ENCODE measurements at regions of chr11 and their contacts with region 1.

Region 1: DNA sequence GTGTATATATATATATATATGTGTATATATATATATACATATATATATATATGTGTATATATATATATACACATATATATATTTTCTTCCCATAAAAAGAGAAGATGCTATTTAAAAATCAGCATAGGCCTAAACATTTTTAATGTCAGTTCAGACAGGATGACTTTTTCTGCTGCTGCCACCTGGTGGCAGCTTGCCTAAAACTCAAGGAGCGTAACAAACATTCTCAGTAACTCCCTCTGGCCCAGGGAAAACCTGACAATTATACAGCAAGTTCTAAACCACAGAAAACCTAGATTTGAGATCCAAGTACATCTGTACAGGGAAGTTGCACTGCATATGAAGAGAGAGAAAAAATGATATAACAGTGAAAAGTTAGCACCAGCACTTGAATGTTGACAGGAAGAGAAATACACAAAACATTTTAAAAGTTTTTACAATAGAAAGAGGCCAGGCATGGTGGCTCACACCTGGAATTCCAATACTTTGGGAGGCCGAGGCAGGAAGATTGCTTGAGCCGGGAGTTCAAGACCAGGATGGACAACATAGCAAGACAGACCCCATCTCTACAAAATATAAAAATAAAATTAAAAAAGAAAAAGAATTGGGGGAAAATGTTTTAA is 16.6 kb downstream of the OR8A1 start:
- DNase-seq: no peak
- H3K4me3 ChIP-seq: no peak overlapping the region
- H3K27ac ChIP-seq: no peak overlapping the region
- H3K4me1 ChIP-seq: no peaks in the 10 kb centered on the region
- H3K27me3 ChIP-seq: no peaks in the 10 kb centered on the region
- CTCF ChIP-seq: peak in 1 of 3 experiments; percentile 21
- POLR2A ChIP-seq: no peak

Region 2: DNA sequence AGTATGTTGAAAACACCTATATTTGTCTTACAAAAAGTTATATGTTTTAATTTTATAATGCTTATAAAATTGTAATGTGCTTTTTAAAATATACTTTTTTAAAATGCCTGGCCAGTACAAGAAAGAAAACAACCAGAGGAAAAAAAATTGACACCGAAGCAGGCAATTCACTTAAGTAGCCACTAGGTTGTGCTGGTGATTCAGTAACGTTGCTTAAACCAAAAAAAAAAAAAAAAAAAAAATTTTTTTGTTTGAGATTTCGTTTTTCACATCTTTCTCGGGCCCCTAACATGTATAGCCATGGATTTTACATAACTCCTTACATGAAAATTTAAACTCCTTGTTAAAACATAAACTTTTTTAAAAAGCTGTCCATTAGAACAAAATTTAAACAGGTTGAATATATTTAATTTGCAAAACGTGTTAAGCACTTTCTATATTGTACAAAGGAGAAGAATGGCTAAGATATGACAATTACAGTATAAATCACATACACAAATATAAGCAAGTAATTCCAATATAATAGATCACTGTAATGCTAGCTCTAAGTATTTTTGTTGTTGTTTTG is 170.9 kb before region 1 on chr11:
- intact Hi-C with region 1: loop called (anchors 10 kb)
- DNase-seq: no peak
- H3K4me3 ChIP-seq: no peak overlapping the region
- H3K27ac ChIP-seq: no peak overlapping the region
- H3K4me1 ChIP-seq: no peaks in the 10 kb centered on the region
- H3K27me3 ChIP-seq: no peaks in the 10 kb centered on the region
- CTCF ChIP-seq: peak in 1 of 3 experiments; percentile 10
- POLR2A ChIP-seq: no peak

Measured in vagina (tissue), 2 donors.